Prostate gland (tissue), 2 donors: ENCODE measurements at regions of chr6 and their contacts with region 1.

Region 1: DNA sequence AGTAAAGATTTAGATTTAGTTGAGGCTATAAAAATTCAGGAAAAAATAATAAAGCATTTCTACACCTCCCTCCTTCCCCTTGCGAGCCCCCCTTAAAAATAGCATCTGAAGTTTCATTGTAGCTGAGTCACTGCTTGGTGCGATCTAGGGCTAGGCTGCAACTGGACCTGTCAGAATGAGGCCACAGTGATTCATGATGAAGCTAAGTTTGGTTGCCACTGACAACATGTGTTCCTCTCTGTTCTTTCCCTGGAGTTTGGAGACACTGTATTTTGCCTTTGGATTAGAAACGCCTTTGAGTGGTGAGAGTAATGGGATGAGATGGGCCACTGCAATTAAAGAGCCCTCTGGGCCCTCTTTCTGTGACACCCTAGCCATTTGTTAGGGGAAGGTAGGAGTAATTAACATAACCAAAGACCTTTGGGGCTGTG is 334.1 kb downstream of the NRN1 start:
- DNase-seq: no peak
- H3K4me3 ChIP-seq: no peak overlapping the region
- H3K27ac ChIP-seq: peak overlapping the region in 1 of 2 donors; percentile 20
- H3K4me1 ChIP-seq: no peaks in the 10 kb centered on the region
- H3K27me3 ChIP-seq: no peaks in the 10 kb centered on the region
- CTCF ChIP-seq: no peak
- POLR2A ChIP-seq: no peak

Region 2: DNA sequence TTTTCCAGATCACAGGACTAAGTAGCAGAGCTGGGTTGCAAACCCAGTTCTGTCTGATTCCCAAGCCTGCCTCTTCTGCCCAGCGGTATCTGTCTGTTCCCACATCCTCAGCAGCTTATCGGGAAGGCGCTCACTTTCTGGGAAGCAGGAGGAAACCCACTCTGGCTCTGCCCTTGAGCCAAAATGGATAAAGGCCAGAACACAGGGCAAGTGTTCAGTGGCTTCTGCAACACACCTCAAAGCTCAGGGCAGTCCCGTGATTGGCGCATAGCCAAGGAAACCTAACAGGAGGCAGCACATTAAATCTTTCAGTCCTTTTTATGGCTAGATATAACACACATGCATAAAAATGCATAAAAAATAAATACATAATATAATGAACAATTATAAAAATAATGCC is 71.9 kb after region 1 on chr6:
- intact Hi-C with region 1: no loop called
- DNase-seq: no peak
- H3K4me3 ChIP-seq: no peak overlapping the region
- H3K27ac ChIP-seq: no peak overlapping the region
- H3K4me1 ChIP-seq: no peaks in the 10 kb centered on the region
- H3K27me3 ChIP-seq: no peaks in the 10 kb centered on the region
- CTCF ChIP-seq: no peak
- POLR2A ChIP-seq: no peak

Region 3: GRCh38 chr6:5764401-5764955 is 91.9 kb after region 1 on chr6:
- intact Hi-C with region 1: loop called (anchors 2 kb)
- DNase-seq: no peak
- H3K4me3 ChIP-seq: no peak overlapping the region
- H3K27ac ChIP-seq: no peak overlapping the region
- H3K4me1 ChIP-seq: no peaks in the 10 kb centered on the region
- H3K27me3 ChIP-seq: no peaks in the 10 kb centered on the region
- CTCF ChIP-seq: no peak
- POLR2A ChIP-seq: no peak

Region 4: DNA sequence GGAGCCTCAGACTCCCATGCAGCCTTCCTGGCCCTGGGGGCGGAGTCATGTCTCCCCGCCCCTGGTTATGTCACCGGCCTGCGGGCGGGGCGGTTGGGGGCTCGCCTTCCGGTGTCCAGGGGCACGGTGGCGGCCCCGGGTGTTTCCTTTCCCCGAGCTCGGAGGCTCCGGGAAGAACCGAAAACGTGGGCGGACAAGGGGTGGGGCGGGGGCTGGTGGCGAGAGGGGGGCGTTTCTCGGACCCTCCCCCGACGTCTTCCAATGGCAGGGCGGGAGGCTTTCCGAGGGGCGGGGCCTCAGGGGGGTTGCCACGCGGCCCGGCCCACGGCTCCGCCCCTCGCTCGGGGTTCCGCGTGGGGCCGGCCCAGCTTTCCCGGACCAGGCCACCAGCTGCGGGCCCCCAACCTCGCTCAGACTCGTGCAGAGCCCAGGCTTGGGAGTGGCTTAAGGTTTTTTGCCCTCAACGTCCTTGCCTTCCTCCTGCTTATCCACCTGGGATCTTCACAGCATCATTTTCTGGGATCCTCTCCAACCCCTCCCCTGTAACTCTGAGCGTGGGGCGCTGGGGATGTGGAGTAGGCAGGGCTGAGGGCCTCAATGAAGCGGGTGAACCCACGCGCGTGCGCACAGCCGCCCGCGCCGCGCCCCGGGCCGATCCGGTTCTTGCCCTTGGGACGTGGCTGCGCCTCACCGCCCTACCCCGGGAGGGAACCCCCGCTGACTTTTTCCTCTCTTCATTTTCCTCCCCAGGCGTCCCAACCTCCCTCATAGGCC is 336.2 kb after region 1 on chr6:
- intact Hi-C with region 1: no loop called
- DNase-seq: no peak
- H3K4me3 ChIP-seq: peak overlapping the region; percentile 7 to 11
- H3K27ac ChIP-seq: peak overlapping the region; percentile 11 to 19
- H3K4me1 ChIP-seq: no peaks in the 10 kb centered on the region
- H3K27me3 ChIP-seq: peaks cover 39% of the 10 kb centered on the region
- CTCF ChIP-seq: no peak
- POLR2A ChIP-seq: no peak